Right cardiac atrium (tissue), 5 donors: ENCODE measurements at regions of chr15 and their contacts with region 1.

Region 1: GRCh38 chr15:26864664-26865191 is 2.1 kb upstream of the GABRA5 start:
- DNase-seq: peak in 1 of 3 donors; percentile 63
- ATAC-seq: peak; percentile 62 to 76
- H3K4me3 ChIP-seq: no peak overlapping the region
- H3K27ac ChIP-seq: no peak overlapping the region
- H3K4me1 ChIP-seq: no peaks in the 10 kb centered on the region
- H3K27me3 ChIP-seq: no peaks in the 10 kb centered on the region

Region 2: GRCh38 chr15:25947323-25948314 is 917.1 kb before region 1 on chr15:
- intact Hi-C with region 1: loop called in 2 of 4 experiments (anchors 10 kb)
- DNase-seq: no peak
- ATAC-seq: no peak
- H3K4me3 ChIP-seq: no peak overlapping the region
- H3K27ac ChIP-seq: no peak overlapping the region
- H3K4me1 ChIP-seq: no peaks in the 10 kb centered on the region
- H3K27me3 ChIP-seq: no peaks in the 10 kb centered on the region

Region 3: DNA sequence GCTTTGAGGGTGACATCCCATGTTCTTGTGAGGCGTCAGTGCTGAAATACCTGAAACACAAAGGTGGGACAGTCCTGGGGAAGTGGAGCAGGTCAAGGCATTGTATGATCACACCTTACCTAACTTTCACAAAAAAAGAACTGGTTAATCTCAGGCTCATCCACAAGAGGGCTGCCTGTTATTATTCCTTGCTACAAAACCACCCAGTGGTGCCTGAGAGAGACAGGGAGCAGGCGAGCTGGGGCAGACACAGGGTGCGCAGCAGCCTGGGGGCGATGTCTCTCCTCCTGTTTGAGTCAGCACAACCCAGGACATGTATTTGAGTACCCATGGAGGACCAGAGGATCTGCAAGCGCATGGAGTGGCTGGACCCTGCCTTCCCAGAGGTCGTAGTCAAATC is 684.8 kb before region 1 on chr15:
- intact Hi-C with region 1: loop called in 3 of 4 experiments (anchors 5 to 10 kb)
- DNase-seq: peak in 2 of 3 donors; percentile 48 to 60
- ATAC-seq: peak; percentile 77 to 89
- H3K4me3 ChIP-seq: no peak overlapping the region
- H3K27ac ChIP-seq: no peak overlapping the region
- H3K4me1 ChIP-seq: no peaks in the 10 kb centered on the region
- H3K27me3 ChIP-seq: no peaks in the 10 kb centered on the region

Region 4: GRCh38 chr15:26744894-26745293 is 119.8 kb before region 1 on chr15:
- intact Hi-C with region 1: no loop called
- DNase-seq: no peak
- ATAC-seq: no peak
- H3K4me3 ChIP-seq: no peak overlapping the region
- H3K27ac ChIP-seq: no peak overlapping the region
- H3K4me1 ChIP-seq: no peaks in the 10 kb centered on the region
- H3K27me3 ChIP-seq: no peaks in the 10 kb centered on the region

Region 5: GRCh38 chr15:26901041-26901440 is 36.3 kb after region 1 on chr15:
- intact Hi-C with region 1: no loop called
- DNase-seq: no peak
- ATAC-seq: no peak
- H3K4me3 ChIP-seq: no peak overlapping the region
- H3K27ac ChIP-seq: no peak overlapping the region
- H3K4me1 ChIP-seq: no peaks in the 10 kb centered on the region
- H3K27me3 ChIP-seq: no peaks in the 10 kb centered on the region